HEK293 (cell line): ENCODE measurements at regions of chrX and their contacts with region 1.

Region 1: GRCh38 chrX:16436348-16437188 is 213.4 kb upstream of the S100G start:
- H3K4me3 ChIP-seq: no peak overlapping the region
- H3K27ac ChIP-seq: no peak overlapping the region
- H3K4me1 ChIP-seq: no peaks in the 10 kb centered on the region
- CTCF ChIP-seq: peak; percentile 34; the same call in 1 of the 2 replicates

Region 2: GRCh38 chrX:16670998-16671397 is 234.4 kb after region 1 on chrX:
- CTCF ChIA-PET with region 1: interaction called, 11 read pairs
- POLR2A ChIA-PET with region 1: no interaction called
- H3K4me3 ChIP-seq: no peak overlapping the region
- H3K27ac ChIP-seq: no peak overlapping the region
- H3K4me1 ChIP-seq: no peaks in the 10 kb centered on the region
- CTCF ChIP-seq: no peak

Region 3: DNA sequence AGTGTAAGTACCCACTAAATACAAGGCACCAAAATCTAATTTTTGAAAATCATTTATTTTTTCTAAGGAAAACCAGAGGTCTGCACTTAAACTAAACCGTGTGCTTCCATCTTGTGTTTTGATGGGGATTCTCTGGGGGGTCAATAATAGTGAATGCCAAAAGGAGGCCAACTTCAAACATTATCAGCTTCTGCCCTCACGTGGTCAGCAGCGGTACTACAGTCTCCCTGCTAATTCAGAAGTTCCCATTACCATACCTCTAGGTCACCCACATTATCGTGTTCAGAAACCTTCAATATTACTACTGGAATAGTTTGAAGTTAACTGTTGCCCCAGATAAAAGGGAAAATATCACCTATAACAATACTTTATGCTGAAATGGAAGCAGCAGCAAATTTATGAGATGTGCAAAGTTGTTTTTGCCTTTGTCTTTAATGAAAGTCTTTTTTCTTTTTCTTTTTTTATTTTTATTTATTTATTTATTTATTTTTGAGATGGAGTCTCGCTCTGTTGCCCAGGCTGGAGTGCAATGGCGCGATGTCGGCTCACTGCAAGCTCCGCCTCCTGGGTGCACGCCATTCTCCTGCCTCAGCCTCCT is 258.6 kb after region 1 on chrX:
- CTCF ChIA-PET with region 1: interaction called, 15 read pairs
- POLR2A ChIA-PET with region 1: no interaction called
- H3K4me3 ChIP-seq: no peak overlapping the region
- H3K27ac ChIP-seq: no peak overlapping the region
- H3K4me1 ChIP-seq: no peaks in the 10 kb centered on the region
- CTCF ChIP-seq: peak; percentile 38; the same call in 1 of the 2 replicates